Lower leg skin (tissue), 4 donors: ENCODE measurements at regions of chr12 and their contacts with region 1.

Region 1: GRCh38 chr12:50074936-50075807 is 10.0 kb upstream of the SMARCD1 start:
- DNase-seq: peak; percentile 77 to 97
- H3K4me3 ChIP-seq: no peak overlapping the region
- CTCF ChIP-seq: peak in 2 of 3 donors; percentile 55 to 93
- POLR2A ChIP-seq: no peak

Region 2: DNA sequence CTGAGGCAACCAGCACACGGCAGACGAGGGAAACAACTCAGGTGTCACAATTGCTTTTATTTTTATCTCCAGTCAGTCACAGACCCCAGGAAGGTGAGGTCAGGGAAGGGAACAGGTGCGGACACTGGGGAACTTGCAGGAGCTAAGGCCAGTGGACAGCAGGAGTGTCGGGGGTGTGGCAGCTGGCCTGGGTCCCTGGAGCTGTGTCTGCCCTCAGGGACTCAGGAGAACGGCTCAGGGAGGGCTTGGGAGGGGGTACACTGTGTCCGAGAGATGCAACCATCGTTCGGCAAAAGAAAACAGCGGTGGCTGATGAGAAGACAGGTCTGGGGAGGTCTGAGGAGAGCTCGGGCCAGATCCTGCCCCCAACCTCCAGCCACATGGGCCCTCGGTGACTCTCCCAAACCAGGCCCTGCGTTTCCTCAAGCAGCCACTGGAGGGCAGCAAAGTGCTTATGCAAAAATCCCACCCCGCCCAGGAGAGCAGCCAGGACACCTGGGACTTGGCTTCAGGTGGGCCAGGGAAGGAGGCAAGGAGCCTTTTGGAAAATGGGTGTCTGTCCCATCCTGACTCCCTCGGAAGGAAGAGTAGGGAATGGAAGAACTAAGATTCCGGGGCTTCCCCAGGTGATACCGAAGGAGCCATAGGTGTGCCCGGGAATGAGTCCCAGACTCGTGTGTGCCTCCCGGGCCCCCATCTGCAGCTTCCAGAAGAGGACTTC is 208.2 kb before region 1 on chr12:
- intact Hi-C with region 1: loop called (anchors 5 kb)
- DNase-seq: peak; percentile 63 to 94
- H3K4me3 ChIP-seq: no peak overlapping the region
- CTCF ChIP-seq: peak in 1 of 3 donors; percentile 85
- POLR2A ChIP-seq: no peak

Region 3: GRCh38 chr12:50174971-50175715 is 100.0 kb after region 1 on chr12:
- intact Hi-C with region 1: loop called (anchors 5 kb)
- DNase-seq: peak in 1 of 2 donors; percentile 34
- H3K4me3 ChIP-seq: no peak overlapping the region
- CTCF ChIP-seq: peak in 1 of 3 donors; percentile 30
- POLR2A ChIP-seq: no peak

Region 4: DNA sequence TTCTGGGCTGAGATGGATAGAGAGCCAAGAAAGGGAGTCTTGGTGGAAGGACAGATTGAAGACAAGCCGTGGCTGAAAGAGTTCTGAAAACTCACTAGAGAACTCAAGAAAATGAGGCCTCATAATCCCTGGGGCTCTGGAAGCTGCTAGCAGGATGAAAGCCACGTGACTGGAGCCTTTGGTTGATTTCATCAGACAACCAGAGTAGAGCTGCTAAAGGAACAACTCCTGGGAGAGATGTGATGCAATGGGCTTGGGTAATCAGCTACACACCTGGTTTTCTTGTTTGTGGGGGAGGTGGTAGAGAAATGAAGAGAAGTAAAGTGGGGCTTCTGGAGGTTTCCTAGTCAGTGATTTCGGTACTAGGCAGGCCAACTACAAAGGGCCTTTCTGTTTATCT is 994.8 kb after region 1 on chr12:
- intact Hi-C with region 1: no loop called
- DNase-seq: no peak
- H3K4me3 ChIP-seq: no peak overlapping the region
- CTCF ChIP-seq: no peak
- POLR2A ChIP-seq: no peak